GM12878 (cell line): ENCODE measurements at regions of chr7 and their contacts with region 1.

Region 1: DNA sequence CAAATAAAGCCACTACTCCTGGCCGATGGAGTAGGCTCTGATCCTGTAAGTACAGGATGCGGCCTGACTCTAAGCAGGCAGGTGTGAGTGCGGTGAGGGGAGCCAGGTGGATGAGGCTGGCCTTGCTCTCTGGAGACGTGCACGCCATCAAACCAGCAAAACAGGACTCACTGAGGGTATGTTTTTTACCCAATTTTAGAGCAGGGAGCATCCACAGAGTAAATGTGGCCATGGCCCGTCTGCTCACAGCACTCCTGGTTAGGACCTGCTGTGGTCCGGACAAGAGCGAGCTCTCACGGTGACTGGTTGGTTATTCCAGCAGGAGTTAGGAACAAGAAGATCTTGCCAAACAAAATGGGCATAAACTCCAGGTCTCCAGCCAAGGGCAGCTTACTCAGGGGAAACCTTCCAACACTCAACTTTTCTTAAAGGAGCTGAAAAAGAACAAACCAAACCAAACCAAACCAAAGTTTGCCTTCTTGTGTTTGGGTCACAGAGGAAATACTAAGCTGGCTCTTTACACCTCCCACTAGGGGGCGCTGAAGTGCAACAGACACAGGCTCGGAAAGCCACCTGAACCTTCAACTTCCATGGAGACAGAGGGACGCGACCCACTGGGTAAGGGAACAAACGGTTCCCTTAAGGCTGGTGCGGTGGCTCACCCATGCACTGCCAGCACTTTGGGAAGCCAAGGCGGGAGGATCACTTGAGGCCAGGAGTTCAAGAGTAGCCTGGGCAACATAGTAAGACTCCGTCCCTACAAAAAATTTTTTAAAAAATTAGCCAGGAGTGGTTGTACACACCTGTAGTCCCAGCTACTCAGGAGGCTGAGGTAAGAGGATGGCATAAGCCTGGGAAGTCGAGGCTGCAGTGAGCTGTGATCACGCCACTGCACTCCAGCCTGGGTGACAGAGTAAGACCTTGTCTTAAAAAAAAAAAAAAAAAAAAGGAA is 122.4 kb downstream of the CLEC2L start:
- DNase-seq: peak; percentile 28
- ATAC-seq: peak; percentile 43
- H3K4me3 ChIP-seq: no peak overlapping the region
- H3K27ac ChIP-seq: no peak overlapping the region
- H3K4me1 ChIP-seq: peaks cover 39% of the 10 kb centered on the region
- H3K27me3 ChIP-seq: no peaks in the 10 kb centered on the region
- CTCF ChIP-seq: peak; percentile 81 to 92 (median 87)
- EP300 ChIP-seq: no peak
- POLR2A ChIP-seq: no peak
- RAD21 ChIP-seq: peak; percentile 98

Region 2: GRCh38 chr7:139557857-139558581 is 87.8 kb before region 1 on chr7:
- CTCF ChIA-PET with region 1: no interaction called
- POLR2A ChIA-PET with region 1: no interaction called
- RAD21 ChIA-PET with region 1: no interaction called
- SMC1A ChIA-PET with region 1: no interaction called
- in situ Hi-C with region 1: no loop called
- intact Hi-C with region 1: no loop called
- DNase-seq: no peak
- ATAC-seq: no peak
- H3K4me3 ChIP-seq: no peak overlapping the region
- H3K27ac ChIP-seq: no peak overlapping the region
- H3K4me1 ChIP-seq: no peaks in the 10 kb centered on the region
- H3K27me3 ChIP-seq: no peaks in the 10 kb centered on the region
- CTCF ChIP-seq: no peak
- EP300 ChIP-seq: no peak
- POLR2A ChIP-seq: no peak
- RAD21 ChIP-seq: no peak

Region 3: DNA sequence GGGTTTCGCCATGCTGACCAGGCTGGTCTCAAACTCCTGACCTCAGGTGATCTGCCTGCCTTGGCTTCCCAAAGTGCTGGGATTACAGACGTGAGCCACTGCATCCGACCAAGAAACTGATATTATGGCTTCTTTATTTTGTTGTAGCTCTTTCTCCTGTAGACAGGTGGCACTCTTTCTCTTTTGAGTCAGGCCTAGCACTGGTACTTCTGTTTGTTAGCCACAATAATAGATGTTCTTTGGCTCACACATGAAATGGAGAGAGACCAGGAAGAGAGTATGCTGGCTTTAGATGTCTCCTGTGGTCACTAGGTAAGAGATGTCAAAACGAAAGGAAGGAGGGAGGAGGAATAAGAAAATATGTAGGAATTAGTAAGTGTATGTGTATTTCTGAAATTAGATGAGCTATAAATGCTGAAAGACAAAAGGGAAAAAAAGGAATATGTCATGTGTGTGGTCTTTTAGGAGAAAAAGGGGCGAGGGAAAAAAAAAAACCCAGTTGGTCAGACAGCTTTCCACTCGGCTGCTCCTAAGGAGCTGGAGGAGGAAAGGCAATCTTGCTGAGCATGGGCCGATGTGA is 43.6 kb before region 1 on chr7:
- CTCF ChIA-PET with region 1: interaction called, 42 read pairs
- POLR2A ChIA-PET with region 1: no interaction called
- RAD21 ChIA-PET with region 1: interaction called, 9 read pairs
- SMC1A ChIA-PET with region 1: interaction called, 11 read pairs
- in situ Hi-C with region 1: no loop called
- intact Hi-C with region 1: no loop called
- DNase-seq: no peak
- ATAC-seq: peak; percentile 87
- H3K4me3 ChIP-seq: no peak overlapping the region
- H3K27ac ChIP-seq: no peak overlapping the region
- H3K4me1 ChIP-seq: no peaks in the 10 kb centered on the region
- H3K27me3 ChIP-seq: no peaks in the 10 kb centered on the region
- CTCF ChIP-seq: peak; percentile 41 to 59 (median 57)
- EP300 ChIP-seq: no peak
- POLR2A ChIP-seq: no peak
- RAD21 ChIP-seq: peak; percentile 56

Region 4: DNA sequence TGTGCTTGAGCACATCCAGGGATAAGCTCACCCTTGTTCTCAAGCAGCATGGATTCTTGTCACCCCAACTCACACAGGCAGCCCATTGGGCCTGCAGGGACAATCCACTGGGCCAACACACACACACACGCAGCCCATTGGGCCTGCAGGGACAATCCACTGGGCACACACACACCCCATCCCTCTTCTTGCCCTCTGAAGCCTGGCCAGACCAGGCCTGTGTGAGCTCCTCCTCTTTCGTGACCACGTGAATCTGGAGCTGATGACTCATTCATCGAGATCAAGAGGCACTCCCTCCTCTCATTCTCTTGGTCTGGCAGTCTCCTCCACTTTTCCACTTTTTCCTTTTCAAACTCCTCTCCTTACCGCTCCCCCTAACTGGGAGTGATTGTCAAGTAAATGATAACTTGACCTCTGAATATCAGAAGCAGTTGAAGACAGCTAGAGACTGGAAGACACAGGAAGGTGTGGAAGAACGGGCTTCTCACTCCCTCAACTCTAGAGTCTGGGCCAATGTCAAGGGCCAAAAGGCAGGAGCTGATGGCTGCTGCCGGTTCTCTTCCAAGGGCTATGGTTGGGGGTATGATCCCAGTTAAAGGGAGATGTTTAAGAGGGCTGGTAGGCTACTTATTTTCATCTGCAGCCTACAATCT is 42.3 kb after region 1 on chr7:
- CTCF ChIA-PET with region 1: interaction called, 20 read pairs
- POLR2A ChIA-PET with region 1: interaction called, 6 read pairs
- RAD21 ChIA-PET with region 1: interaction called, 54 read pairs
- SMC1A ChIA-PET with region 1: interaction called, 43 read pairs
- in situ Hi-C with region 1: no loop called
- intact Hi-C with region 1: no loop called
- DNase-seq: no peak
- ATAC-seq: no peak
- H3K4me3 ChIP-seq: no peak overlapping the region
- H3K27ac ChIP-seq: no peak overlapping the region
- H3K4me1 ChIP-seq: peaks cover 13% of the 10 kb centered on the region
- H3K27me3 ChIP-seq: no peaks in the 10 kb centered on the region
- CTCF ChIP-seq: no peak
- EP300 ChIP-seq: no peak
- POLR2A ChIP-seq: no peak
- RAD21 ChIP-seq: no peak

Region 5: GRCh38 chr7:139757968-139758367 is 112.1 kb after region 1 on chr7:
- CTCF ChIA-PET with region 1: interaction called, 13 read pairs
- POLR2A ChIA-PET with region 1: no interaction called
- RAD21 ChIA-PET with region 1: interaction called, 7 read pairs
- SMC1A ChIA-PET with region 1: interaction called, 7 read pairs
- in situ Hi-C with region 1: no loop called
- intact Hi-C with region 1: no loop called
- DNase-seq: no peak
- ATAC-seq: no peak
- H3K4me3 ChIP-seq: no peak overlapping the region
- H3K27ac ChIP-seq: no peak overlapping the region
- H3K4me1 ChIP-seq: peaks cover 6% of the 10 kb centered on the region
- H3K27me3 ChIP-seq: no peaks in the 10 kb centered on the region
- CTCF ChIP-seq: no peak
- EP300 ChIP-seq: no peak
- POLR2A ChIP-seq: no peak
- RAD21 ChIP-seq: no peak

Region 6: GRCh38 chr7:139823959-139824521 is 178.2 kb after region 1 on chr7:
- CTCF ChIA-PET with region 1: interaction called, 52 read pairs
- POLR2A ChIA-PET with region 1: no interaction called
- RAD21 ChIA-PET with region 1: interaction called, 22 read pairs
- SMC1A ChIA-PET with region 1: interaction called, 38 read pairs
- in situ Hi-C with region 1: no loop called
- intact Hi-C with region 1: loop called (anchors 2 kb)
- DNase-seq: no peak
- ATAC-seq: no peak
- H3K4me3 ChIP-seq: no peak overlapping the region
- H3K27ac ChIP-seq: no peak overlapping the region
- H3K4me1 ChIP-seq: peaks cover 5% of the 10 kb centered on the region
- H3K27me3 ChIP-seq: peaks cover 0 to 1% of the 10 kb centered on the region in 2 experiments; a peak in 1 of 4 replicates
- CTCF ChIP-seq: no peak
- EP300 ChIP-seq: no peak
- POLR2A ChIP-seq: no peak
- RAD21 ChIP-seq: no peak

Region 7: GRCh38 chr7:139915864-139916716 is 270.2 kb after region 1 on chr7:
- CTCF ChIA-PET with region 1: interaction called, 6 read pairs
- POLR2A ChIA-PET with region 1: no interaction called
- RAD21 ChIA-PET with region 1: interaction called, 15 read pairs
- SMC1A ChIA-PET with region 1: interaction called, 11 read pairs
- in situ Hi-C with region 1: no loop called
- intact Hi-C with region 1: no loop called
- DNase-seq: peak; percentile 91
- ATAC-seq: peak; percentile 94
- H3K4me3 ChIP-seq: no peak overlapping the region
- H3K27ac ChIP-seq: peak overlapping the region; percentile 88
- H3K4me1 ChIP-seq: peaks cover 29% of the 10 kb centered on the region
- H3K27me3 ChIP-seq: no peaks in the 10 kb centered on the region
- CTCF ChIP-seq: no peak
- EP300 ChIP-seq: peak in 1 of 2 experiments; percentile 71; a peak in 1 of 4 replicates
- POLR2A ChIP-seq: peak; percentile 58
- RAD21 ChIP-seq: peak; percentile 24; the same call in 1 of the 2 replicates